MCF 10A (cell line): ENCODE measurements at regions of chr17 and their contacts with region 1.

Region 1: DNA sequence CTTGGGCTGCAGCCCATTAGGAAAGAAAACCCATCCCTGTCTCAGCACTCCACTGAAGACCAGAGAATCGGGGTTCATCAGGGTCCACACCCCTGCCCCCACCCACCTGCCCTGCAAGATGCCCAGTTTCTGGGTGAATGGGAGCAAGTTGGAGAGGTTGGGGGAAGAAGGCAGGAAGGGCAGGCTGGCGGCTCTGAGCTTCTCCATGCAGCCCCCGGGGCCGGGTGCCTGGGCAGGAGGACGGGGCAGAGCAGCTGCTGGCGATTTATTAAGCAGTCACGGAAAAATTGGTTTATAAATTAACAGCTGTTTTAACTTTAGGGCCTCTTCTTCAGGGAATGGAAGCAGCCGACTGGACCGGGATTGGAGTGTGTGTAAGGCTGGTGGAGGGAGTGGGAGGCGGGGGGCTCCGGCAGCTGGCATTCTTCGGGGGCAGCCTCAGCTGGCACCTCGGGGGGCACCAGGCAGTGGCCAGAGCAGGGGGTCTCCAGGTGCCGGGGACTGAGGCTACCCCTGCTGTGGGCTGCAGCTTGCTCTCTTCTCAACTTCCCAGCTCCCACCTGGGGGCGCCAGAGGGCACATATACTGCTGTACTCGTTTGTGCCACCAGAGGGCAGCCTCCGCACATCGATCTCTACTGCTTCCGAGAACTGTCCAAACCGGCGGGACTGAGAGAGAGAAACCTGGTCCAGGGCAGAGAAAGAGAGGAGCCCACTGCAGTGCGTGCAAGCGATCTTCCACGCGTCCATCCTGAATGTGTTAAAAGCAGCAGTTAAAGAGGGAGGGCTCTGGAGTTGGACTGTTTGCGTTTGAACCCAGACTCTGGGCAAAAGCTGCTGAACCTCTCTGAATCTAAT is 5.0 kb upstream of the PPP1R1B start:
- DNase-seq: peak; percentile 85
- H3K4me3 Mint-ChIP-seq: peak overlapping the region; percentile 9
- H3K27ac Mint-ChIP-seq: no peak overlapping the region
- H3K4me1 Mint-ChIP-seq: peaks cover 9% of the 10 kb centered on the region
- H3K27me3 Mint-ChIP-seq: peaks cover 14% of the 10 kb centered on the region
- CTCF ChIP-seq: peak; percentile 100

Region 2: DNA sequence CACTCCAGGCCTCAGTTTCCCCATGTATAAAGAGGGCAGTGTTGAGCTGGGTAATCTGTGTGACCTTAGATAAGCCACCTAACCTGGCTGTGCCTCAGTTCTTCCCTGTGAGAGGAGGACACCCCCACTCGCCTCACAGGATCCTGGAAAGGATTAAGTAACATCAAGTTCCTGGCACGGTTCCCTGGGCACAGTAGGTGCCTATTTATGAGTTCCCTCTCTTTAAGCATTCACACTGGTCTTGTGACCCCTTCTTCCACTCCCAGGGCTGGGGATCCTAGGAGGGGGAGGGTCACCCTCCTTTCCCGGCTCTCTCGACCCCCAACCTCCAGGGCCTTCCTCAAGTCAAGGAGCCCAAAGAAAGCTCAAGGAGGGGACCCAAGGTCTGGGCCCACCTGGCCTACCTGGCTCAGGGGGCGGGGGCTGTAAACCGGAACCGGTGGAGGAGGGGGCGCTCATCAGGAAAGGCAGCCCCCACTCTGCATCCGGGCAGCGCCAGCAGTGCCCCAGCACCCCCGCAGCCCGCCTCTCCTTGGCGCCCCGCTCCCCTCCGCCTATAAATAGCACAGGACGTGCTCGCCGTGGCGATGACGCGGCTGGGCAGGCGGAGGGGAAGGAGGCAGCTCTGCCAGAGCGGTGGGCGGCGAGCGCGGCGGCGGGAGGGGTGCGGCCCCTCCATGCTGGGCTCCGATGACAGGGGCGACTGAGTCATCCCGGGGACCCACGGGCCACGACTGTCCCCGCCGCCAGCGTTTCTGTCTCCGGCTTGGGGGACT is 412.2 kb before region 1 on chr17:
- CTCF ChIA-PET with region 1: interaction called, 5 read pairs
- POLR2A ChIA-PET with region 1: no interaction called
- intact Hi-C with region 1: loop called (anchors 1 kb)
- DNase-seq: peak; percentile 94
- H3K4me3 Mint-ChIP-seq: peak overlapping the region; percentile 54
- H3K27ac Mint-ChIP-seq: peak overlapping the region; percentile 83
- H3K4me1 Mint-ChIP-seq: peaks cover 56% of the 10 kb centered on the region
- H3K27me3 Mint-ChIP-seq: no peaks in the 10 kb centered on the region
- CTCF ChIP-seq: no peak

Region 3: DNA sequence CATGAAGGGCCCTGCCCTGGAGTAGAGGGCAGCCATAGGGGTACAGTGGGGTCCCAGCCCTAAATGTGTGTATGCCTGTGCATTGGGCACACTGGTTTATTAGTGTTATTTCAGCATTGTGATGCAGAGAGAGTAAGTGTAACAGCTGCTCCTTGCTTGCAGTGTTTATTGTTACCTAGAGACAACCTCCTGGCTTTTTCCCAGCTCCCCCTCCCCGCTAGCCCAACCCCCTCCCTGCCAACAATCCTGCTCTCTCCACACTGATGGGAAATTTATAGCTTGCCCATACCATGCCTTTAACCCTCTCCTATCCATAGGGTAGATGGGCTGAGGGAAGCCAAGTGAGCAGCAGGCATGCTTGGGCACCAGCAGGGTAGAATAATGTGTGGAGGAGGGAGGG is 65.3 kb before region 1 on chr17:
- CTCF ChIA-PET with region 1: interaction called, 125 read pairs
- POLR2A ChIA-PET with region 1: interaction called, 4 read pairs
- intact Hi-C with region 1: no loop called
- DNase-seq: no peak
- H3K4me3 Mint-ChIP-seq: no peak overlapping the region
- H3K27ac Mint-ChIP-seq: no peak overlapping the region
- H3K4me1 Mint-ChIP-seq: peaks cover 15% of the 10 kb centered on the region
- H3K27me3 Mint-ChIP-seq: no peaks in the 10 kb centered on the region
- CTCF ChIP-seq: no peak

Region 4: DNA sequence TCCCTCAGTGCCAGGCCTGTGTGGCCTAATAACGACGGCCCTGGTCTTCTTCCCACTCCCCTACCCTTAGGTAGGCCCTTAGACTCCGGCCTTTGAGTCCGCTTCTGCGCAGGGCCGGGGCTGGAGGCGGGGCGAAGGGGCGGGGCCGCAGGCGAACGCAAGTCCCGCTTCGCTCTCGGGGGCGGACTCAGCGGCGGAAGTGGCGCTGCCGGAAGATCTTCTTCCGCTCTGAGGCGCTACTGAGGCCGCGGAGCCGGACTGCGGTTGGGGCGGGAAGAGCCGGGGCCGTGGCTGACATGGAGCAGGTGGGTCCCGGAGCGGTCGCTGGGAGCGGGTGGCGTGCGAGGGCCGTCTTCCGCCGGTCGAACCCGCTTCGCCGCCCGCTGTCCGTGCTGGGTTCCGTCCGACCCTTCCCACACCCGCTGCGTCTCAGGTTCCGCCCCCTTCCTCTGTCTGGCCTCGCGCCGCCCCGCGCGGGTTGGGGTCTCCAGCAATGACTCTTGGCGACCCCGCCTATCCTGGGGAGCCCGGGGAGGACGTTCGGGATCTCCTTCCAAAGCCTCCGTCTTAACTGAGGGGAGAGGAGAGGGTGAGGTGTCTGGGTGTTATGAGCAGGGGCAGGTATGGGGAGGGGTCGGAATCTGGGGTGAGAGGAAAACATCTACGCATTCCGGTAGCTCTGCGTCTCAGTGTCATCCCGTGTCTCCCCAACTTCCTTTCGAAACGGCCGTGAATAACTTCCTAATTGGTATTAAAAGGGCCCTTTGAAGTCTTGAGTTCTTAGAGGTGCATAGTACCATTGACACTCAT is 15.4 kb after region 1 on chr17 and contains the start of gene STARD3:
- CTCF ChIA-PET with region 1: interaction called, 146 read pairs
- POLR2A ChIA-PET with region 1: interaction called, 4 read pairs
- intact Hi-C with region 1: no loop called
- DNase-seq: peak; percentile 82
- H3K4me3 Mint-ChIP-seq: peak within 1 kb of the TSS; percentile 93
- H3K27ac Mint-ChIP-seq: peak within 1 kb of the TSS; percentile 97
- H3K4me1 Mint-ChIP-seq: peaks cover 20% of the 10 kb centered on the region
- H3K27me3 Mint-ChIP-seq: peaks cover 3% of the 10 kb centered on the region
- CTCF ChIP-seq: peak; percentile 9
- total RNA-seq, gene STARD3: 30.1 and 31.1 TPM in 2 replicates

Region 5: GRCh38 chr17:39738931-39739884 is 117.5 kb after region 1 on chr17:
- CTCF ChIA-PET with region 1: interaction called, 3 read pairs
- POLR2A ChIA-PET with region 1: interaction called, 6 read pairs
- intact Hi-C with region 1: loop called (anchors 5 kb)
- DNase-seq: peak; percentile 90
- H3K4me3 Mint-ChIP-seq: peak overlapping the region; percentile 81
- H3K27ac Mint-ChIP-seq: peak overlapping the region; percentile 95
- H3K4me1 Mint-ChIP-seq: peaks cover 45% of the 10 kb centered on the region
- H3K27me3 Mint-ChIP-seq: peaks cover 11% of the 10 kb centered on the region
- CTCF ChIP-seq: no peak

Region 6: DNA sequence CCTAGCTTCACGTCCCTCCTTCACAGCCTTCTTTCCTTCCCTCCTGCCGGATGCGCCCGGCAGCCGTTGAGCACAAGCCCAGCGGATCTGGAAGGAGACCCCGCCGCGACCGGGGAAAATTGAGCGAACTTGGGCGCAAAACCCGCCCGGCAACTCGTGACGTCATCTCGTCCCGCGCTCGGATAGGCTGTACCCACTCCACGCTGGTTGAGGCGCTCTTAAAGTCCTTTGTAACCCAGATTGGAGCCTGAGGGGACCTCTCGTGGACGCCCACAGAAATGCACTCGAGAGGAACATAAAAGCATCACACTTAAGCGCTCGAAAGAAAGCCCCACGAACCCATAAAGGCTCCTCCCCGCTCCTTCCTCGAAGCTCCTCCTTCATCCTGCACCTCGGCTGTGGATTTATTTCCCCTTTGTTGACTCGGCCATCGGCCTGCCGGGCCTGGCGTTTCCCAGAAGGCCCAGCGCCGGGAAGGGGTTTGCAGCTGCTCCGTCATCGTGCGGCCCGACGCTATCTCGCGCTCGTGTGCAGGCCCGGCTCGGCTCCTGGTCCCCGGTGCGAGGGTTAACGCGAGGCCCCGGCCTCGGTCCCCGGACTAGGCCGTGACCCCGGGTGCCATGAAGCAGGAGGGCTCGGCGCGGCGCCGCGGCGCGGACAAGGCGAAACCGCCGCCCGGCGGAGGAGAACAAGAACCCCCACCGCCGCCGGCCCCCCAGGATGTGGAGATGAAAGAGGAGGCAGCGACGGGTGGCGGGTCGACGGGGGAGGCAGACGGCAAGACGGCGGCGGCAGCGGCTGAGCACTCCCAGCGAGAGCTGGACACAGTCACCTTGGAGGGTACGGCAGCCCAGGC is 358.8 kb after region 1 on chr17 and contains the start of gene PSMD3:
- CTCF ChIA-PET with region 1: interaction called, 17 read pairs
- POLR2A ChIA-PET with region 1: interaction called, 4 read pairs
- intact Hi-C with region 1: loop called (anchors 2 kb)
- DNase-seq: peak; percentile 99
- H3K4me3 Mint-ChIP-seq: peak within 1 kb of the TSS; percentile 96
- H3K27ac Mint-ChIP-seq: peak within 1 kb of the TSS; percentile 98
- H3K4me1 Mint-ChIP-seq: peaks cover 26% of the 10 kb centered on the region
- H3K27me3 Mint-ChIP-seq: no peaks in the 10 kb centered on the region
- CTCF ChIP-seq: peak; percentile 50
- total RNA-seq, gene PSMD3: 74.2 and 95.3 TPM in 2 replicates

Region 7: GRCh38 chr17:40622509-40622928 is 1000.8 kb after region 1 on chr17:
- CTCF ChIA-PET with region 1: no interaction called
- POLR2A ChIA-PET with region 1: no interaction called
- intact Hi-C with region 1: no loop called
- DNase-seq: no peak
- H3K4me3 Mint-ChIP-seq: no peak overlapping the region
- H3K27ac Mint-ChIP-seq: no peak overlapping the region
- H3K4me1 Mint-ChIP-seq: no peaks in the 10 kb centered on the region
- H3K27me3 Mint-ChIP-seq: no peaks in the 10 kb centered on the region
- CTCF ChIP-seq: no peak